Breast epithelium (tissue), 4 donors: ENCODE measurements at regions of chr4 and their contacts with region 1.

Region 1: DNA sequence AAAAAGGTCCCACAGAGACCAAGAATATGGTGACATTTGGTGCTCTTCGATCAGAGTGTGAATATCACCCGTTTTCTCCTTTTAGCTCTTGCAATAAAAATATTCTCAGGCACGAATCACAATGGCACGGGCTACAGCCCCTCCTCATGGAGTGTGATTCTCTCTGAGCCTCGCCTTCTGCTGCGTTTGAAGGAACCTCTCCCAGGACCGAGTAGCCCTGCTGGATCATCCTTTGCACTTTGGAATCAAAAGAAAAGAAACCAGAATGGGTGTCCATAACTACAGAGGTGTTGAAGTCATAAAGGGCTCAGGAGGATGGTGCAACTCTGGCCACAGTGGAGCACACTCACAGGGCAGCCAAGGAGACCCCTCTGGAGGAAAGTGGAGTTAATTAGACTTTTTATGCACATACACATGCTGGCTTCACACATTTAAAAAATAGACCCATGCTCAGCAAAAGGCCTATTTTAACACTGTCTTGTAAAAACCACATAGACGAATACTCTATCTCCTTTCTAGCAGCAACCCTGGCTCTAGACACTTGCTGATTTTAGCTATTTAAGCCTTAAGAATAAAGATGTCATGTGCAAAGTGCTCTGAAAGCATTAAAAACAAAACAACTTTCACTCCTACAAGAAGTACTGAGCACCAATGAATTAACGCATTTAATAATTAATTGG is 19.1 kb downstream of the MAML3 start:
- DNase-seq: no peak
- H3K4me3 ChIP-seq: no peak overlapping the region
- H3K27ac ChIP-seq: no peak overlapping the region
- H3K4me1 ChIP-seq: no peaks in the 10 kb centered on the region
- H3K27me3 ChIP-seq: no peaks in the 10 kb centered on the region
- CTCF ChIP-seq: no peak
- POLR2A ChIP-seq: no peak

Region 2: GRCh38 chr4:140099983-140100382 is 34.9 kb before region 1 on chr4:
- intact Hi-C with region 1: loop called (anchors 1 kb)
- DNase-seq: no peak
- H3K4me3 ChIP-seq: no peak overlapping the region
- H3K27ac ChIP-seq: peak overlapping the region; percentile 28 to 85
- H3K4me1 ChIP-seq: peaks cover 6 to 12% of the 10 kb centered on the region in 2 donors
- H3K27me3 ChIP-seq: no peaks in the 10 kb centered on the region
- CTCF ChIP-seq: no peak
- POLR2A ChIP-seq: no peak